CD4-positive, alpha-beta T cell (primary cell): ENCODE measurements at regions of chr14 and their contacts with region 1.

Region 1: GRCh38 chr14:91350813-91351511 is 66.7 kb downstream of the CCDC88C start:
- DNase-seq: peak in 8 of 14 experiments; percentile 30 to 91 (median 54)
- ATAC-seq: peak; percentile 65
- H3K4me3 ChIP-seq: peak overlapping the region; percentile 47
- H3K4me3 Mint-ChIP-seq: peak overlapping the region; percentile 89
- H3K27ac ChIP-seq: peak overlapping the region; percentile 77 to 81
- H3K27ac Mint-ChIP-seq: peak overlapping the region; percentile 94
- H3K4me1 ChIP-seq: peaks cover 91% of the 10 kb centered on the region
- H3K4me1 Mint-ChIP-seq: peaks cover 89% of the 10 kb centered on the region
- H3K27me3 ChIP-seq: no peaks in the 10 kb centered on the region
- H3K27me3 Mint-ChIP-seq: no peaks in the 10 kb centered on the region
- CTCF ChIP-seq: no peak

Region 2: DNA sequence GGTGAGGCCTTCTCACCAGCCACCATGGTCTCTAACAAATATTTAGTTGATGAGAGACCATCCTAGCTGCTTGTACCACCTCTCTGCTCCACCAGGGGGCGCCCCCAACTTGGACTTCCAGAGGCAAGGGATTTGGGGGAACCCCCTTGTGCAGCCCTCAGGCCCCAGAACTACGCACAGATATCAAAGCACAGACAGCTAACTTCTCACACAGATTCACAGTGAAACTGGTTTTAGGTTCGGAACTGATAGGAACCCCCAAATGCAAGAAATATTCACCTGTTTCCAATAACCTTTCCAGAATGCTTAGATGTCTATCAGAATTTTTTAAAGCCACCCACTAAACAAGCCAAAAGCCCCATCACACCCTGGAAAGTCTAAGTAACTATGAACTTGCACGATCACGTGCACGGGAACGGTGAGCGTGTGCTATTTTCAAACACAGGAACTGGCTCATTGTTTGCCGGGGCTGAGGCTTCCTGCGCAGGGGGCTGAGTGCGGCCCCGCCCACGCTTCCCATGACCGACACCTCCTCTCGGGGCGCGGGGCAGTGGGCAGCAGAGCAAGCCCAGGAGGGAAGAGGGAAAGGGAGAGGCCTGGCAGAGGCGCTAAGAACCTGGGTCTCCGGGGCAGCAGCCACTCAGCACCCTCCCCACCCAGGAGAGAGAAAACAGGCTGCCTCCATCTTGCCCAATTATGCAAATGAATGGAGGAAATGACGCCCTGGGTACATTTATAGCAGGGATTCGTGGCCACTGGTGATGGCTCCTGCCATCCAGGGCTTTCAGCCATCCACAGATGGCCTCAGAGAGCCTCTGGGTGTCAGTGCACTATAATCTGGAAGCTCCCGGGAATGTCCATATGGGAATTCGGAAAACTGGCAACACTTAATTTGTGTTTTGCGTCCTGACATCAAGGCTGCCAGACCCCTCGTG is 27.0 kb before region 1 on chr14:
- CTCF ChIA-PET with region 1: interaction called, 31 read pairs
- POLR2A ChIA-PET with region 1: interaction called, 35 read pairs
- intact Hi-C with region 1: loop called (anchors 2 kb)
- DNase-seq: peak; percentile 87 to 97 (median 92)
- ATAC-seq: peak; percentile 80
- H3K4me3 ChIP-seq: peak overlapping the region; percentile 47
- H3K4me3 Mint-ChIP-seq: peak overlapping the region; percentile 81
- H3K27ac ChIP-seq: peak overlapping the region; percentile 93 to 95
- H3K27ac Mint-ChIP-seq: peak overlapping the region; percentile 97
- H3K4me1 ChIP-seq: peaks cover 97% of the 10 kb centered on the region
- H3K4me1 Mint-ChIP-seq: peaks cover 80% of the 10 kb centered on the region
- H3K27me3 ChIP-seq: no peaks in the 10 kb centered on the region
- H3K27me3 Mint-ChIP-seq: no peaks in the 10 kb centered on the region
- CTCF ChIP-seq: peak; percentile 95

Region 3: GRCh38 chr14:91367173-91368171 is 16.5 kb after region 1 on chr14:
- CTCF ChIA-PET with region 1: interaction called, 5 read pairs
- POLR2A ChIA-PET with region 1: interaction called, 37 read pairs
- intact Hi-C with region 1: loop called (anchors 2 kb)
- DNase-seq: peak in 13 of 14 experiments; percentile 37 to 98 (median 64)
- ATAC-seq: peak; percentile 85
- H3K4me3 ChIP-seq: peak overlapping the region; percentile 32
- H3K4me3 Mint-ChIP-seq: peak overlapping the region; percentile 86
- H3K27ac ChIP-seq: peak overlapping the region; percentile 76 to 80
- H3K27ac Mint-ChIP-seq: peak overlapping the region; percentile 96
- H3K4me1 ChIP-seq: peaks cover 99% of the 10 kb centered on the region
- H3K4me1 Mint-ChIP-seq: peaks cover 86% of the 10 kb centered on the region
- H3K27me3 ChIP-seq: no peaks in the 10 kb centered on the region
- H3K27me3 Mint-ChIP-seq: no peaks in the 10 kb centered on the region
- CTCF ChIP-seq: no peak

Region 4: DNA sequence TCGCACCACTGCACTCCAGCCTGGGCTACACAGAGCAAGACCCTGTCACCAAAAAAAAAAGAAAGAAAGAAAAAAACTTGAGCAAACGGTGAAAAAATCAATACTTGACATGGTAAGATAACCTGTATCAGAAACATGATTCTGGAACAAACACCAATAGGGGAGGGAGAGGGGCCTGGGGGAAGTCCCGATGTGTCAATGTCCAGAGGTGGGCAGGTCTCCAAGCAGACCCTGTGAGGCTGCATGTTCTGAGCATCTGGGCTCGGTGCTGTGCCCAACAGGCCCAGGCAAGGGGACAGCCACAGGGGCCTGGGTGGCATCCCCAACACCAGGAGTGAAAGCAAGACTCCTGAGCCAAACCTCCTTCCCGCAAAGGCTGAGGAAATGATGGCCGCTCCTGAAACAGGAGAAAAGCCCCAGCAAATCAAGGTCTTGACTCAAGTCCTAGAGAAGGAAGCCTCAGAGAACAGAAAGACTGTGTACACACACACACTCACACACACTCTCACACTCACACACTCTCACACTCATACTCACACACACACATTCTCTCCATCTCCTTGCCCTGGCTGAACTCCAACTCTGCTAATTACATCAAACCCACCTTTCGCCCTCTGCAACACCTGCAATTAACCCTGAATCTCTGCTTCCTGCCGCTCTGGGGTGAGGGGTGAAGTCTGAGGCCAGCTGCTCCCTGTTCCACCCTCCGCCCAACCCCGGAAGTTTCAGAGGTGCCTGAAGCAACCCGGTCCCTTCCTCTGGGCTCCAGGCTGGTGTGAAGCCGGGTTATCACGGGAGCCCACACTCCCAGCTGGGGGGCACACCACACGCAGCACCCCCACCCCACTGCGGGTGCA is 46.2 kb after region 1 on chr14:
- CTCF ChIA-PET with region 1: interaction called, 7 read pairs
- POLR2A ChIA-PET with region 1: interaction called, 33 read pairs
- intact Hi-C with region 1: no loop called
- DNase-seq: peak in 13 of 14 experiments; percentile 48 to 87 (median 64)
- ATAC-seq: peak; percentile 76
- H3K4me3 ChIP-seq: peak overlapping the region; percentile 67
- H3K4me3 Mint-ChIP-seq: peak overlapping the region; percentile 78
- H3K27ac ChIP-seq: peak overlapping the region; percentile 26 to 66
- H3K27ac Mint-ChIP-seq: peak overlapping the region; percentile 98
- H3K4me1 ChIP-seq: peaks cover 98% of the 10 kb centered on the region
- H3K4me1 Mint-ChIP-seq: peaks cover 90% of the 10 kb centered on the region
- H3K27me3 ChIP-seq: no peaks in the 10 kb centered on the region
- H3K27me3 Mint-ChIP-seq: no peaks in the 10 kb centered on the region
- CTCF ChIP-seq: no peak